Activated T-helper 1 cell treated with anti-CD3 and anti-CD28 coated beads, Interleukin-12 subunit alpha, Interleukin-12 subunit beta, Interleukin-2, Interleukin-4 antibody, amounts not matched to agents 30 ng/mL and 10 ng/mL and 1 ng/mL, durations not matched to agents 14 hours and 24 hours and 36 hours (primary cell): ENCODE measurements at regions of chr5 and their contacts with region 1.

Region 1: GRCh38 chr5:56900858-56901578 is 8.4 kb upstream of the SETD9 start:
- DNase-seq: no peak
- H3K4me3 Mint-ChIP-seq: no peak overlapping the region
- H3K27ac Mint-ChIP-seq: no peak overlapping the region
- H3K4me1 Mint-ChIP-seq: no peaks in the 10 kb centered on the region
- H3K27me3 Mint-ChIP-seq: peaks cover 10% of the 10 kb centered on the region

Region 2: GRCh38 chr5:56918054-56918453 is 17.0 kb after region 1 on chr5:
- intact Hi-C with region 1: no loop called
- DNase-seq: no peak
- H3K4me3 Mint-ChIP-seq: no peak overlapping the region
- H3K27ac Mint-ChIP-seq: no peak overlapping the region
- H3K4me1 Mint-ChIP-seq: peaks cover 5% of the 10 kb centered on the region
- H3K27me3 Mint-ChIP-seq: no peaks in the 10 kb centered on the region

Region 3: GRCh38 chr5:56993241-56993640 is 92.2 kb after region 1 on chr5:
- intact Hi-C with region 1: no loop called
- DNase-seq: no peak
- H3K4me3 Mint-ChIP-seq: no peak overlapping the region
- H3K27ac Mint-ChIP-seq: no peak overlapping the region
- H3K4me1 Mint-ChIP-seq: no peaks in the 10 kb centered on the region
- H3K27me3 Mint-ChIP-seq: peaks cover 9% of the 10 kb centered on the region

Region 4: DNA sequence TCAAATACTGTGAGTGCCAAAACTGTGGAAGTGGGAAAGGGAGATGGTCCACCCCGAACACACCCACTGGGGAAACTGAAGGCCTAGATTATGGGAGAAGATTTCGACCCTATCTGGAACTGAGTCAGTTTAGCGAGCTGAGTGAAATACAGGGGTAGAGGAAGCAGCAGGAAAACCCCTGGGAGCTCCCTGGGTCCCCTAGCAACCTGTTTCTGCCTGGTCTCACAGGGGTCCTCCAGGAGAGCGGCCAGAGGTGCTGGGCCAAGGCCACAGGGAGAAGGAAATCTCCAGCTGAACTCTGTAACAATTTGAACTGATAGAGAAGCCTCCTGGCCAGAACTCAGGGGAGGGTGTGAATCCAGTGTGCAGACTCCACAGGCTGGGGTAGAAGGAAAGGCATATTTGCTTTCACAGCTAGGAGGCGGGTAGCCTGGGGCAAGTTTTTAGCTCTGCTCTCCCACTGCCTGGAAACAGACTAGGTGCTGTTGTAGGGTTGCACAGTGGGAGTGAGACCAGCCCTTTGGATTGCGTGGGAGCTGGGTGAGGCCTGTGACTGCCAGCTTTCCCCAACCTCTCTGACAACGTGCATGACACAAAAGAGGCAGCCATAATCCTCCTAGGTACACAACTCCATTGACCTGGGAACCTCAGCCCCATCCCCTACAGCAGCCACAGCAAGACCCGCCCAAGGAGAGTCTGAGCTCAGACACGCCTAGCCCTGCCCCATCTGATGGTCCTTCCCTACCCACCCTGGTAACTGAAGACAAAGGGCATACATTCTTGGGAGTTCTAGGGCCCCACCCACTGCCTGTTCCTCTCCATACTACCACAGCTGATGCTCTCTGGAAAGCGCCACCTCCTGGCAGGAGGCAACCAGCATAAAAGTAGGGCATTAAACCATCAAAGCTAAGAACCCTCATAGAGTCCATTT is 194.0 kb after region 1 on chr5:
- intact Hi-C with region 1: loop called (anchors 1 kb)
- DNase-seq: no peak
- H3K4me3 Mint-ChIP-seq: no peak overlapping the region
- H3K27ac Mint-ChIP-seq: no peak overlapping the region
- H3K4me1 Mint-ChIP-seq: no peaks in the 10 kb centered on the region
- H3K27me3 Mint-ChIP-seq: peaks cover 15% of the 10 kb centered on the region

Region 5: DNA sequence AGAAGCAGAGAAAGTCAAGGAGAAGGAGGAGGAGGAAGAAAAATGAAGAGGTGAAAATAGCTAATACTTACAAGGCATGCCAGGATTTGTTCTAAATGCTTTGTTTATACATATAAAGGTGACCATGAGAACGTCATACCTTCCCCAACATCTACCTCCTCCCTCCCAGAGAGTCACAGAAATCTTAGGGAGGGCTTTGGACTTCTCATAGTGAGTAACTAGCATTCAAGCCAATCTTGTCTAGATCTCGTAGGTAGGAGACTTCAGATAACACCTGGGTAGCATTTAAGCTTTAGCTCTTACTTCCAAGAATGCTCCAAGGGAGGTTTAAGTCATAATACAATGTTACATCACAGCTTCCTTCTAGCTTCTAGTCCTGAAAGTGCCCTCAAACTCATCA is 236.4 kb after region 1 on chr5:
- intact Hi-C with region 1: loop called (anchors 1 kb)
- DNase-seq: no peak
- H3K4me3 Mint-ChIP-seq: no peak overlapping the region
- H3K27ac Mint-ChIP-seq: no peak overlapping the region
- H3K4me1 Mint-ChIP-seq: no peaks in the 10 kb centered on the region
- H3K27me3 Mint-ChIP-seq: peaks cover 21% of the 10 kb centered on the region

Region 6: GRCh38 chr5:57221049-57221568 is 320.1 kb after region 1 on chr5:
- intact Hi-C with region 1: loop called (anchors 1 kb)
- DNase-seq: peak; percentile 17
- H3K4me3 Mint-ChIP-seq: no peak overlapping the region
- H3K27ac Mint-ChIP-seq: no peak overlapping the region
- H3K4me1 Mint-ChIP-seq: peaks cover 18% of the 10 kb centered on the region
- H3K27me3 Mint-ChIP-seq: no peaks in the 10 kb centered on the region

Region 7: DNA sequence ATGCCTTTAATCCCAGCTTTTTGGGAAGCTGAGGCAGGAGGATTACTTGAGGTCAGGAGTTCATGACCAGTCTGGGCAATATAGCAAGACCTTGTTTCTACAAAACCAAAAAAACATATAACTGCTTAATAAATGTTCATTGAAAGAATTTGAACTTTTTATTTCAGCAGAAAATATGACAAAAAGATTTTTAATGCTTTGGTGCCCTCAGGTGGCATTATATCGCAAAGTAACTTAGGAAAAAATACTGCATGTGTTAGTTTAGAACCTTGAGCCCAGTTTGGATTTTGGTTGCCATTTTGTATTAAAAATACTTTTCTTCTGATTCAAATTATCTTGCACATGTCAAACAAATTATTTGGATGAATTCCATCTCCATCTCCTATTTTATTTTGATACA is 376.1 kb after region 1 on chr5:
- intact Hi-C with region 1: loop called (anchors 1 kb)
- DNase-seq: no peak
- H3K4me3 Mint-ChIP-seq: no peak overlapping the region
- H3K27ac Mint-ChIP-seq: no peak overlapping the region
- H3K4me1 Mint-ChIP-seq: no peaks in the 10 kb centered on the region
- H3K27me3 Mint-ChIP-seq: peaks cover 9% of the 10 kb centered on the region